Activated CD4-positive, alpha-beta T cell treated with anti-CD3 and anti-CD28 coated beads for 36 hours (primary cell): ENCODE measurements at regions of chr1 and their contacts with region 1.

Region 1: GRCh38 chr1:26787706-26788514 is at the start of gene PIGV:
- DNase-seq: peak; percentile 93
- ATAC-seq: peak; percentile 48
- H3K4me3 Mint-ChIP-seq: peak within 1 kb of the TSS; percentile 82
- H3K27ac Mint-ChIP-seq: peak within 1 kb of the TSS; percentile 99
- H3K4me1 Mint-ChIP-seq: peaks cover 55% of the 10 kb centered on the region
- H3K27me3 Mint-ChIP-seq: no peaks in the 10 kb centered on the region
- total RNA-seq, gene PIGV: 12.0 to 17.2 TPM

Region 2: DNA sequence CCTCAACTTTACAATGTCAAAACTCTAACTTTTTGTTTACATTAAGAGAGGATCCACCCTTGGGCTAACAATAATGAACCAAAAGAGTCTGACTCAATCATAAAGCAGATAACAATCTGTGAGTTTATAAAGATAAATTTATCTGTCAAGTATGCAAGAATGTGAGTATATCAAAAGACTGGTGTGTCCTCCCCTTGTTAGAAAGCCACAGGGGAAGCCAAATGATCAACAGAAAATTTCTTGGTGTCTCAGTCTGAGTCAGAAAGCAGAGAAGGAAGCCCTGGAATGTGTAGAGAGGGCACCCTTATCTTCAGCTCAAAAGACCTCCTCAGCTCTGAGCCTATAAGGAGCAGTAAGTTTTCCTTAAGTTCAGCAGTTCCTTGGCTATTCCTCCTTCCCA is 690.2 kb before region 1 on chr1:
- CTCF ChIA-PET with region 1: no interaction called
- POLR2A ChIA-PET with region 1: no interaction called
- intact Hi-C with region 1: no loop called
- DNase-seq: no peak
- ATAC-seq: no peak
- H3K4me3 Mint-ChIP-seq: no peak overlapping the region
- H3K27ac Mint-ChIP-seq: no peak overlapping the region
- H3K4me1 Mint-ChIP-seq: peaks cover 4% of the 10 kb centered on the region
- H3K27me3 Mint-ChIP-seq: no peaks in the 10 kb centered on the region

Region 3: DNA sequence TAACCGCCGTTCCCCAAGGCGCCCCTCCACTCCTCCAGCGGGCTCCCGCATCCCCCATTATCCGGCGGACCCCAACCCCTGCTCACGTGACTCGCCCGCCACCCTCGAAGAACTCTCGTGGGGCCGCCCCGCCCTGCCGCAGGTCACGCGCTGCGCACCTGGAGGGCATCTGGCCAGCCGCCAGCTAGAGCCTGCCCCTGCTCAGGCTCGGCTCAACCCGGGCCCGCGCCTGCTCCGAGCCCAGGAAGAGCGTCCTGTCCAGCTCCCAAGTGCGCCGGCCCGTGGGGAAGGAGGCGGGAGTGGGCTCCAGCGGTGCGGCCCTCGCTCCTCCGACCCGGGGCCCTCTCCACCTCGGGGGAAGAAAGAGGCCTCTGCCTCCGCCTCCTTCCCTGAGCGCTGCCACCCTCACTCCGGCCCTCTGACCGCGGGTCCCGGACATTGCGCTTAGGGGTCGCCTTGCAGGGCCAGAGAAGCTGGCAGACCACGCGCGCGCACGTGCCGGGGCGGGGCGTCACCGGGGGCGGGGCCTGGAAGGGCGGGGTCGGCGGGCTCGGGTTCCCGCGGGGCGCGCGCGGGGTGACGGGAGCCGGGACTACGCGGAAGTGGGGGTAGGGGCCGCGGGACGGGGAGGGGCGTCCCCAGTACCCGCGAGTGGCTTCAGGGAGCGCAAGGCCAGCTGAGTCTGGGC is 287.3 kb before region 1 on chr1:
- CTCF ChIA-PET with region 1: interaction called, 11 read pairs
- POLR2A ChIA-PET with region 1: interaction called, 3 read pairs
- intact Hi-C with region 1: loop called (anchors 1 kb)
- DNase-seq: peak; percentile 95
- ATAC-seq: peak; percentile 77
- H3K4me3 Mint-ChIP-seq: peak overlapping the region; percentile 88
- H3K27ac Mint-ChIP-seq: peak overlapping the region; percentile 94
- H3K4me1 Mint-ChIP-seq: peaks cover 16% of the 10 kb centered on the region
- H3K27me3 Mint-ChIP-seq: no peaks in the 10 kb centered on the region

Region 4: DNA sequence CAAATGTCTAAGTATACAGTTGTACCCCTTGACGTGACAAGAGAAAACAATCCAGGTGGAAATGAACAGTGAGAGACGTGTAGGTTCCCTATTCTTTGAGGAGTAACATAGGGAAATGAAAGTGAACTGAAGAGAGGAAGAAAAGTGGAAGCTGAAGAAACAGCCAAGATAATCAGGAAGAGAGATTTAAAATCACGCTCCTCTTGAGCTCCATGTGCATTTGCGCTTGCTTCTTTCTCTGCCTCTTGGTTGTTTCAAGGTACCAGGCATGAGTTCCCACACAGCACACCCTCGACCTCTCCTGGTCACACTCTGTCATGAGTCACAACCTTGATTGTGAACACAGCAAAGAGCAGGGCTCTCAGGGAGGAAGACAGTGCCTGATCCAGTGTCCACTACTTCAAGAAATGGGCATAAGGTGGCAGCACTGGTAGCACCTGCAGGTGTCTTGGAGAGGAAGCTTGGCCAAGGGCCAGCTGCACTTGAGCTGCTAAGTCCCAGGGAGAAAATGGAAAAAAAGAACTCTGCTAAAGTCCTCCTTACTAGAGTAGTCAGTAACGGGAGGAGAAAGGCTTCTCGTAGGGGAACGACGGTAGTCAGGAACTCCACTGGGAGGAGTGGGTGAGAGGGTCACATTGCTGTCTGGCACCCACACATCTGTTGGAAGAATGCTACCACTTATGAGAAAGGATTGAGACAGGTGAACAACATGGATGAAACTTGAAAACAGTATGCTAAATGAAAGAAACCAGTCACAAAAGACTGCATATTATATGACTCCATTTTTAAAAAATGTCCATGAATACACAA is 110.4 kb before region 1 on chr1:
- CTCF ChIA-PET with region 1: interaction called, 30 read pairs
- POLR2A ChIA-PET with region 1: no interaction called
- intact Hi-C with region 1: loop called in 1 of 2 experiments (anchors 1 kb)
- DNase-seq: peak; percentile 74
- ATAC-seq: peak; percentile 100
- H3K4me3 Mint-ChIP-seq: peak overlapping the region; percentile 1
- H3K27ac Mint-ChIP-seq: peak overlapping the region; percentile 48
- H3K4me1 Mint-ChIP-seq: peaks cover 15% of the 10 kb centered on the region
- H3K27me3 Mint-ChIP-seq: no peaks in the 10 kb centered on the region

Region 5: DNA sequence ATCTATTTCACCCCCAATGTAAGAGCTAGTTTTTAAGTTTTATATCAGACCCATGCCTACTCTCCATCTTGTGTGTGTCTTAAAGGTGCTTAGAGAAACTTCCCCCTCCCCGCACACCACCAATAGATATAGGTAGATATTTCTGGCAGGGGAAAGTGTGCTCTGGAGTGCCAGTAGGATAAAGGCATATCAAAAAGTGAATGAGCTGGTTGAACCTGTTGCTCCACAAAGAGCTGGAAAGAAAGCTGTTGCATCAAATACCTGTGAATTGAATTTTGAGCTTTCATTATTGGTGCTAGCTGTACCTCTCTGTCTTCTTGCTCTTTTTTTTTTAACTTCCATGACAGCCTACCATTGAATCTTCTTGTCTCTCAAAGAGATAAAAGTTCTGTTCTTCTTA is 59.3 kb before region 1 on chr1:
- CTCF ChIA-PET with region 1: interaction called, 19 read pairs
- POLR2A ChIA-PET with region 1: interaction called, 3 read pairs
- intact Hi-C with region 1: no loop called
- DNase-seq: no peak
- ATAC-seq: no peak
- H3K4me3 Mint-ChIP-seq: no peak overlapping the region
- H3K27ac Mint-ChIP-seq: peak overlapping the region; percentile 13
- H3K4me1 Mint-ChIP-seq: peaks cover 93% of the 10 kb centered on the region
- H3K27me3 Mint-ChIP-seq: no peaks in the 10 kb centered on the region

Region 6: GRCh38 chr1:26811057-26811456 is 23.1 kb after region 1 on chr1:
- CTCF ChIA-PET with region 1: interaction called, 11 read pairs
- POLR2A ChIA-PET with region 1: interaction called, 4 read pairs
- intact Hi-C with region 1: loop called in 1 of 2 experiments (anchors 1 kb)
- DNase-seq: no peak
- ATAC-seq: no peak
- H3K4me3 Mint-ChIP-seq: no peak overlapping the region
- H3K27ac Mint-ChIP-seq: no peak overlapping the region
- H3K4me1 Mint-ChIP-seq: peaks cover 17% of the 10 kb centered on the region
- H3K27me3 Mint-ChIP-seq: no peaks in the 10 kb centered on the region

Region 7: GRCh38 chr1:26874896-26875295 is 87.0 kb after region 1 on chr1:
- CTCF ChIA-PET with region 1: interaction called, 8 read pairs
- POLR2A ChIA-PET with region 1: no interaction called
- intact Hi-C with region 1: loop called (anchors 1 to 5 kb)
- DNase-seq: no peak
- ATAC-seq: no peak
- H3K4me3 Mint-ChIP-seq: no peak overlapping the region
- H3K27ac Mint-ChIP-seq: no peak overlapping the region
- H3K4me1 Mint-ChIP-seq: peaks cover 2% of the 10 kb centered on the region
- H3K27me3 Mint-ChIP-seq: no peaks in the 10 kb centered on the region

Region 8: DNA sequence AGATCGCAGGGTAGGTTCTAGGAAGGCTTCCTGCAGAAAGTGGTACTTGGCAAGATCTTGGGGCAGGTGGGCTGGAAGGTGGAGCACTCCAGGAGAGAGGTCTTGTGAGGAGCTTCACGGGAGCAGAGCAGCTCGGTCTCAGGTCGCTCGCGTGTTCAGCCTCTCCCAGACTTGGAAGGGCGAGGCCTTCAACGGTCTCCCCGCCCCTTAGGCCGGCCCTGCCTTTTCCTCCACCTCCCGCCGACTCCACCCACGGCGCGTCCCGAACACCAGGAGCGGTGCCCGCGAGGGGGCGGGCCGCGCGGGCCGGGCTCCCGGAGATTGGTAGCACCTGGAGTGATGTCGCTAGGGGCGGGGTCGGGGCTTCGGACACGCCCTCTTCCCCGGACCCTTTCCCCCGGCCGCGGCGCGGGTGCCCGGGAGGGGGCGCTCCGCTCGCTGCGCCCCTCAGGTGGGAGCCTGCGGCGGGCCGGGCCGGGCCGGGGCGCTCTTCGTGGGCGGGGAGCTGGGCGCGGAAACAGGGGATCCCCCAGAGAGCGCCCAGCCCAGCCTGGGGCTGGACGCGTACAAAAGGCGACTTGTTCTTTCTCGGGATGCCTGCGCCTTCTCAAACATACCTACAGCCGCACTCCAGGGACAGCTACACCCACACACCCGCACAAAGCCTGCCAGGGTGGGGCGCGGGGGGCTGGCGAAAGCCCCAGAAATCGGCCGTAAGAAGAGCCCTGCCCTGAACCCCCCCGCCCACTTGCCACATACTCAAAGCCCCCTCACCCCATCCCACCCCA is 780.6 kb after region 1 on chr1:
- CTCF ChIA-PET with region 1: no interaction called
- POLR2A ChIA-PET with region 1: no interaction called
- intact Hi-C with region 1: no loop called
- DNase-seq: peak; percentile 95
- ATAC-seq: peak; percentile 97
- H3K4me3 Mint-ChIP-seq: peak overlapping the region; percentile 39
- H3K27ac Mint-ChIP-seq: no peak overlapping the region
- H3K4me1 Mint-ChIP-seq: peaks cover 18% of the 10 kb centered on the region
- H3K27me3 Mint-ChIP-seq: no peaks in the 10 kb centered on the region